ENCODE measurements at regions of chr4 and their contacts with region 1.

Region 1: DNA sequence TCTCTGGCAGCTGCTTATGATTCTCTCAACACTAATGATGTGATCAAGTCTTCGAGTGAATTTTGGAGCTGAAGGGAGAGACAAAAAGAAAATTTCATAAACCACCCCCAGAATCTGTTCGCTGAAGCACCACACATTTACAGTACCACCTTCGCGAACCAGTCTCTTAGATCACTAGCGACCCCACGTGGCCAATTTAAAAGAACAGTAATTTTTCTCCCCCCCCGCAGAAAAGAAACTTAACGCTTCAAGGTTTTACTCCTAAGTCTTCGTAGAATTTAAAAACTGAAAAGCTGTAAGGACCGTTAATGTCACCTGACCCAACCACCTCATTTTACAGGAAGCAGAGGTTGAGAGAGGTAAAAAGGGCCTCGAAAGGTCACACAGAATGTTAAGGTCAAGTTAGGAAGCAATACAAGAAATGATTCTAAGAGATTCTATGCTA is 187.5 kb downstream of the QDPR start:
- DNase-seq: peak in 4 of 10 donors; percentile 29 to 46 (median 38)
- H3K4me3 ChIP-seq: peak overlapping the region in 26 of 59 donors; percentile 1 to 39 (median 23)
- H3K27ac ChIP-seq: peak overlapping the region in 34 of 59 donors; percentile 6 to 81 (median 62)
- H3K27me3 ChIP-seq: no peaks in the 10 kb centered on the region
- CTCF ChIP-seq: peak; percentile 41 to 83 (median 71)

Region 2: GRCh38 chr4:16642895-16643294 is 681.5 kb before region 1 on chr4:
- intact Hi-C with region 1: loop called (anchors 2 to 10 kb)
- DNase-seq: no peak
- H3K4me3 ChIP-seq: no peak overlapping the region
- H3K27ac ChIP-seq: peak overlapping the region in 29 of 59 donors; percentile 3 to 77 (median 50)
- H3K27me3 ChIP-seq: no peaks in the 10 kb centered on the region
- CTCF ChIP-seq: peak in 54 of 56 donors; percentile 17 to 67 (median 48)

Region 3: GRCh38 chr4:16785793-16786527 is 538.4 kb before region 1 on chr4:
- intact Hi-C with region 1: no loop called
- DNase-seq: no peak
- H3K4me3 ChIP-seq: no peak overlapping the region
- H3K27ac ChIP-seq: peak overlapping the region in 3 of 59 donors; percentile 1 to 42 (median 18)
- H3K27me3 ChIP-seq: no peaks in the 10 kb centered on the region
- CTCF ChIP-seq: no peak

Region 4: DNA sequence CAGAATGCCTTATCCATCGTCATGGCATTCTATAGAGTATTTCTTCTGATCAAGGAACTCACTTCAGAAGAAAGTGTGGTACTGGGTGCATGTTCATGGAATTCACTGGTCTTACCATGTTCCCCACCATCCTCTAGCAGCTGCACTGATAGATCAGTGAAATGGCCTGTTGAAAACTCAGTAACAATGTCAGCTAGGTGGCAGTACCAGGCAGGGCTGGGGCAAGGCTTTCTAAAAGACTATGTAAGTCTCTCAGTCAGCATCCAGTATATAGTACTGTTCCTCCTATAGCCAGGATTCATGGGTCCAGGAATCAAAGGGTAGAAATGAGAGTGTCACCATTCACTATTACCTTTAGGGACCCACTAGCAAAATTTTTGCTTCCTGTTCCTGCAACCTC is 410.2 kb before region 1 on chr4:
- intact Hi-C with region 1: loop called in 1 of 2 experiments (anchors 5 kb)
- DNase-seq: peak in 5 of 10 donors; percentile 42 to 66 (median 54)
- H3K4me3 ChIP-seq: no peak overlapping the region
- H3K27ac ChIP-seq: no peak overlapping the region
- H3K27me3 ChIP-seq: no peaks in the 10 kb centered on the region
- CTCF ChIP-seq: peak in 50 of 56 donors; percentile 17 to 61 (median 37)

Region 5: GRCh38 chr4:17272154-17272553 is 52.3 kb before region 1 on chr4:
- intact Hi-C with region 1: no loop called
- DNase-seq: no peak
- H3K4me3 ChIP-seq: no peak overlapping the region
- H3K27ac ChIP-seq: no peak overlapping the region
- H3K27me3 ChIP-seq: no peaks in the 10 kb centered on the region
- CTCF ChIP-seq: no peak

Region 6: GRCh38 chr4:17576932-17577665 is 252.7 kb after region 1 on chr4 and contains the start of gene LAP3:
- intact Hi-C with region 1: no loop called
- DNase-seq: peak; percentile 98 to 99 (median 99)
- H3K4me3 ChIP-seq: peak within 1 kb of the TSS; percentile 63 to 100 (median 91)
- H3K27ac ChIP-seq: peak within 1 kb of the TSS; percentile 17 to 98 (median 92)
- H3K27me3 ChIP-seq: no peaks in the 10 kb centered on the region
- CTCF ChIP-seq: peak in 20 of 56 donors; percentile 4 to 55 (median 20)
- total RNA-seq, gene LAP3: 29.7 to 116 (median 52.0) TPM

Measured in dorsolateral prefrontal cortex (tissue), 120 donors.